ENCODE measurements at regions of chr10 and their contacts with region 1.

Region 1: GRCh38 chr10:70815504-70816219 is at the start of gene SGPL1:
- DNase-seq: peak; percentile 92
- ATAC-seq: peak; percentile 82
- H3K4me3 Mint-ChIP-seq: peak within 1 kb of the TSS; percentile 83
- H3K27ac Mint-ChIP-seq: peak within 1 kb of the TSS; percentile 84
- H3K4me1 Mint-ChIP-seq: peaks cover 38% of the 10 kb centered on the region
- H3K27me3 Mint-ChIP-seq: no peaks in the 10 kb centered on the region
- total RNA-seq, gene SGPL1: 33.7 to 48.7 TPM

Region 2: DNA sequence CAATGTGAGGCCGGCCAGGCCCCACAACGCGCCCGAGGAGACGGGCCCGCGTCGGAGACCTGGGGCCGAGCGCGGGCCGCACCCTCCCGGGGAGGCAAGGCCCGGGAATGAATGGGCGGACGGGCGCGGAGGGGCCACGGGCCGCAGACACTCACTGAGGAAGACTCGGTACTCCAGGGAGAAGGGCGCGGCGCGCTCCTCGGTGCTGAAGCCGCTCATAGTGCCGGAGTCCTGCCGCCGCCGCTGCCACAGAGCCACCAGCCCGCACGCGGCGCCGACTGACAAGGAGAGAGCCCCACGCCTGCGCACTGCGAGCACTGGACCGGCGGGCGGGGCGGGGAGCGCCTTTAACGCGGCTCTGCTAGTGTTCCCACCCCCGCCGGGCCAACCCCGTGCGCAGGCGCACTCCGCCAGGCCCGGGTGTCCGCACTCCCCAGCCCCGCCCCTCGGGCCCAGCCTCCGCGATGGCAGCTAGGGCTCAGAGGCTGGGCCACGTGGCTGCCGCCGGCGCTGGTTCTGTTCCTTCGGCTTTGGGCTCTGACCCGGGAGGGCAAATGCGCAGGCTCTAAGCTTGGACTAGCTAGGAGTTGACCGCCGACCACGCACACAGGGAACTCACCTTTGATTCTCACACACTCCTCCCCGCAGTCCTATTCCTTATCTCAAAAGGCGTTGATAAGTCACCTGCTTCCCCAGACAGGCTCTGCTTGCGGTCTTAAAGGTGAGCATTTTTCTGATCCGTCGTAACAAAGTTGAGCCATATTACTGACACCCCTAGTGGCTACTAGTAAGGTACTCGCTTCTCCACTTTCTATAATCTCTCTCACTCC is 582.3 kb before region 1 on chr10 and contains the start of gene PPA1:
- CTCF ChIA-PET with region 1: no interaction called
- POLR2A ChIA-PET with region 1: no interaction called
- intact Hi-C with region 1: loop called in 1 of 2 experiments (anchors 5 kb)
- DNase-seq: peak; percentile 100
- ATAC-seq: peak; percentile 91
- H3K4me3 Mint-ChIP-seq: peak within 1 kb of the TSS; percentile 83
- H3K27ac Mint-ChIP-seq: peak within 1 kb of the TSS; percentile 89
- H3K4me1 Mint-ChIP-seq: peaks cover 31% of the 10 kb centered on the region
- H3K27me3 Mint-ChIP-seq: no peaks in the 10 kb centered on the region
- total RNA-seq, gene PPA1: 286 to 328 TPM

Region 3: GRCh38 chr10:70549962-70550458 is 265.7 kb before region 1 on chr10:
- CTCF ChIA-PET with region 1: no interaction called
- POLR2A ChIA-PET with region 1: no interaction called
- intact Hi-C with region 1: loop called in 1 of 2 experiments (anchors 2 kb)
- DNase-seq: peak; percentile 83
- ATAC-seq: peak; percentile 91
- H3K4me3 Mint-ChIP-seq: no peak overlapping the region
- H3K27ac Mint-ChIP-seq: no peak overlapping the region
- H3K4me1 Mint-ChIP-seq: no peaks in the 10 kb centered on the region
- H3K27me3 Mint-ChIP-seq: no peaks in the 10 kb centered on the region

Region 4: DNA sequence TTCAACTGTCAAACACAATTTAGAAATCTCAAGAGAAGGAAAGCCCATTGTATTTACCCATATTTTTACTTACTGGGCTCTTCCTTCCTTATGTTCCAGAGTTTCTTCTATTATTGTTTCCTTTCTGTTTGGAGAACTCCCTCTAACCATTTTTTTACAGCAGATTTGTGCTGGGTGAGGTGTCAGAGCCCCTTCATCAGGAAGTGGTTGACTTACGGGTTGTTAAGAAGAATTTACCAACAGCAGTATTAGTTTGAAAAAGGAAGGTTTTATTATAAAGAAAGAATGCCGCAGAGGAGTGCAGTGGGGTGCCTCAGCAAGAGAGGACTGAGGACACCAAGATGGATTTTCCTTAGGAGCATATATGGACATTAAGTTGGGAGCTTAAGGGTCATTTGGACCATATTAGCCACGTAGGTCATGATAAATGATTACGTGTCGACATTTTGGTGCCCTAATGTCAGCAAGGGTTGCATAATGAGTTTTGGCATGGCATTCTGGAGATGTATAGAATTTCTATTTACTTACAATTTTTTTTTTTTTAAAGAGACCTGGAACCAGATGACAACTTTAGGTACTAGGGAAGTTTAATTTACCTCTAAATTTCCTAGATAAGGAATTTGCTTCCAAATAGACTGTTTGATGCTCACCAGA is 24.1 kb before region 1 on chr10:
- CTCF ChIA-PET with region 1: no interaction called
- POLR2A ChIA-PET with region 1: no interaction called
- intact Hi-C with region 1: no loop called
- DNase-seq: no peak
- ATAC-seq: no peak
- H3K4me3 Mint-ChIP-seq: no peak overlapping the region
- H3K27ac Mint-ChIP-seq: no peak overlapping the region
- H3K4me1 Mint-ChIP-seq: peaks cover 5% of the 10 kb centered on the region
- H3K27me3 Mint-ChIP-seq: peaks cover 14% of the 10 kb centered on the region

Region 5: DNA sequence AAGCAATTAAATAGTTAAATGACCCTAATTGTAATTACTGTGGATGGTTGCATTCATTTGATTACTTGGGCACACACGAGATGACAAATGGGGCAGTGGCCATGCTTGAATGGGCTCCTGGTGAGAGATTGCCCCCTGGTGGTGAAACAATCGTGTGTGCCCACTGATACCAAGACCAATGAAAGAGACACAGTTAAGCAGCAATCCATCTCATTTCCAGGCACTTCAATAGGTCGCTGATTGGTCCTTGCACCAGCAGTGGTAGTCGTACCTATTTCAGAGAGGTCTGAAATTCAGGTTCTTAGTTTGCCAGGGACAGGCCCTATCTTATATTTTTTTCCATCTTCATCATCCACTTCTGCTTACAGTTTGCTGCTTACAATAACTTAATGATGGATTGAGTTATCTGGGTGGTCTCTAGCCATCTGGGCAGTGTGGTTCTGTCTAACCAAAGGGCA is 64.4 kb after region 1 on chr10:
- CTCF ChIA-PET with region 1: interaction called, 14 read pairs
- POLR2A ChIA-PET with region 1: no interaction called
- intact Hi-C with region 1: loop called (anchors 1 kb)
- DNase-seq: peak; percentile 86
- ATAC-seq: peak; percentile 94
- H3K4me3 Mint-ChIP-seq: no peak overlapping the region
- H3K27ac Mint-ChIP-seq: no peak overlapping the region
- H3K4me1 Mint-ChIP-seq: peaks cover 10% of the 10 kb centered on the region
- H3K27me3 Mint-ChIP-seq: no peaks in the 10 kb centered on the region

Region 6: DNA sequence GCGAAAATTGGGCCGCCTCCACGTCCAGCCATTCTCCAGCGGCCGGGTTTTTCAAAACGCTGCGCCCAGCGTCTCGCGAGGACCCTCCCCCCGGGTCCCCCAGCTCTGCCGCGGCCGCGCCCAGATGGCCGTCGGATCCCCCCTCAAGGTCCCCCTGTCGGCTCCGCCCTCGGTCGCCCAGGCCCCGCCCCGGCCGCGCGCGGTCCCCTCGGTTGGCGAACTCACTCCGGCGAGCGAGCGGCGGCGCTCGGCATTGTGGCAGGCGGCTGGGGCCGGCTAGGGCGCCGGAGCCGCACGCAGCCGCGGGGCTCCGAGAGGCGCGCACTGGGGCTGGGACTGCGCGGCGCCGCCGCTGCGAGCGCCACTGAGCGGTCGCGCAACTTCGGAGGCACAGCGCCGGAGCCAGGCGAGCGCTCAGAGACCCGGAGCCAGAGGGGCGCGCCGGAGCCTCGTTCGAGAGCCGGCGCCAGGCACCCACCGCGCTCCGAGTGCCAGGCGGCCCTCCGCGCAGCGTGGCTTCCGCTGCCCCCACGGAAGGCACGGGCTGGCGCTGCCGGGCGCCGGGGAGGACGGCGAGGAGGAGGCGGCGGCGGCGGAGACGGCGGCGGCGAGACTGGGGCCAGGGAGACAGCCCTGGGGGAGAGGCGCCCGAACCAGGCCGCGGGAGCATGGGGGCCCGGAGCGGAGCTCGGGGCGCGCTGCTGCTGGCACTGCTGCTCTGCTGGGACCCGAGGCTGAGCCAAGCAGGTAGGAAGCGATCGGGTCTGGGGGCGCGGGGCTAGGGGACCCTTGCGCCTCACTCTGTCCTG is 396.9 kb after region 1 on chr10 and contains the start of gene UNC5B:
- CTCF ChIA-PET with region 1: no interaction called
- POLR2A ChIA-PET with region 1: no interaction called
- intact Hi-C with region 1: loop called in 1 of 2 experiments (anchors 10 kb)
- DNase-seq: peak; percentile 78
- ATAC-seq: peak; percentile 91
- H3K4me3 Mint-ChIP-seq: peak within 1 kb of the TSS; percentile 39
- H3K27ac Mint-ChIP-seq: no peak within 1 kb of the TSS
- H3K4me1 Mint-ChIP-seq: peaks cover 8% of the 10 kb centered on the region
- H3K27me3 Mint-ChIP-seq: peaks cover 55% of the 10 kb centered on the region
- total RNA-seq, gene UNC5B: 0.05 to 0.09 TPM